ENCODE measurements at regions of chr20 and their contacts with region 1.

Region 1: DNA sequence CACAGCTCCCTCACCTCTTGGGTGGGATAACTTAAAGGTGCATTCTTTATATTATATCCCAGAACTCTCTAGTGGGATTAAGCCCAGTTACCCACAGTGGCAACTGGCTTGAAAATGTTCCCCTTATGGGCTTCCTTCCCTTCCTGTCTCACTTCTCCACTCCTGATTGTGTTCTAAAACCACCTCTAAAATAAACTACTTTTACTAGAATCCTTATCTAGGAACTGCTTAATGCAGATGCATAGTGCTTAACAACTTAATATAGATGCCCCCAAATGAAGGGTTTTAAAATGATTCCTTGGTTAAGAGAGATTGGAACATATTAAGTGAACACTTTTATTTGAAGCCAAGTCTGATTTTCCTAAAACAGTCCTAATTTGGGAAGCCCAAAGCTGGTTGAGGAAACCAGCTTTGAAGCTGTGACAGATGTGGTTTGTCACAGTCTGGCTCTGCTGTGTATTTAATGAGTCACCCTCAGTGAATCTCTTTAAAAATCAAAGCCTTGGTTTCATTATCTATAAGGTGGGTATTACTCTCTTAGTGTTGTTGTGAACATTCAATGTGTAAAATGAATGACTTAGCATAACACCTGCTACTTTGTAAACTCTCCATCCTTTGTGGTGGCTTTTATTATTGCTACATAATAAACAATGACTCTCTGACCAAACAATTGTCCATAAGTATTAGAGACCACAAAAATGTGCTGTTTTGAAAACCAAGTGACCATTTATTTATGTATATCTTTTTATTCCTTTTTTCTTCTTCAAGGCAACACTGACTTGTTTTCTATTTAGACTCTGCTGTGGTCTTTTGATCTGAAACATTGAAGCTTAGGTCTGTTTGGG is 24.4 kb downstream of the PLCB1 start:
- DNase-seq: no peak
- ATAC-seq: peak in 2 of 4 donors; percentile 9 to 44
- H3K4me3 ChIP-seq: no peak overlapping the region
- H3K27ac ChIP-seq: peak overlapping the region in 8 of 12 donors; percentile 11 to 64 (median 32)
- H3K4me1 ChIP-seq: peaks cover 4 to 64% (median 38%) of the 10 kb centered on the region in 12 donors
- H3K27me3 ChIP-seq: no peaks in the 10 kb centered on the region
- CTCF ChIP-seq: no peak
- POLR2A ChIP-seq: no peak

Region 2: GRCh38 chr20:8049310-8049709 is 107.1 kb before region 1 on chr20:
- intact Hi-C with region 1: no loop called
- DNase-seq: no peak
- ATAC-seq: no peak
- H3K4me3 ChIP-seq: no peak overlapping the region
- H3K27ac ChIP-seq: no peak overlapping the region
- H3K4me1 ChIP-seq: no peaks in the 10 kb centered on the region
- H3K27me3 ChIP-seq: no peaks in the 10 kb centered on the region
- CTCF ChIP-seq: no peak
- POLR2A ChIP-seq: no peak

Region 3: DNA sequence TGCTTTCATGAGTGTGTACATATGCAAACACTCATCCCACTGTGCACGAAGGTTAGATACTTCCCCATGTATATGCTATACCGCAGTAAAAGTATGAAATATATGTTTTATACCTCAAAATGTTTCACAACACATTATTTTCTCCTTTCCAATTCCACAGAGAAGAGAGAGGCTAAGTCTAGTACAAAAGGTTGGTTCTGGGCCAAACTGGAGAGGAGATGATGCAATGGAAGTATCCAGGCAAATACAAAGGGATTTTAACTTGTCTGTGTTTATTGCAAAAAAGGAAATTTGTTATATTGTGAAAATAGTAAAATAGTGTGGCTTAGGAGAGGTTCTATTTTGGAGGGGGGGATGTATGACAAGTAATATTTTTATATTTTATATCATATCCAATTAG is 88.2 kb after region 1 on chr20:
- intact Hi-C with region 1: loop called in 1 of 10 experiments (anchors 10 kb)
- DNase-seq: peak in 4 of 5 donors; percentile 25 to 57 (median 33)
- ATAC-seq: peak; percentile 49 to 85 (median 72)
- H3K4me3 ChIP-seq: no peak overlapping the region
- H3K27ac ChIP-seq: peak overlapping the region in 8 of 12 donors; percentile 21 to 55 (median 42)
- H3K4me1 ChIP-seq: peaks cover 0 to 39% (median 25%) of the 10 kb centered on the region in 12 donors
- H3K27me3 ChIP-seq: no peaks in the 10 kb centered on the region
- CTCF ChIP-seq: no peak
- POLR2A ChIP-seq: no peak

Measured in heart left ventricle (tissue), 16 donors.